ENCODE measurements at regions of chr11 and their contacts with region 1.

Region 1: DNA sequence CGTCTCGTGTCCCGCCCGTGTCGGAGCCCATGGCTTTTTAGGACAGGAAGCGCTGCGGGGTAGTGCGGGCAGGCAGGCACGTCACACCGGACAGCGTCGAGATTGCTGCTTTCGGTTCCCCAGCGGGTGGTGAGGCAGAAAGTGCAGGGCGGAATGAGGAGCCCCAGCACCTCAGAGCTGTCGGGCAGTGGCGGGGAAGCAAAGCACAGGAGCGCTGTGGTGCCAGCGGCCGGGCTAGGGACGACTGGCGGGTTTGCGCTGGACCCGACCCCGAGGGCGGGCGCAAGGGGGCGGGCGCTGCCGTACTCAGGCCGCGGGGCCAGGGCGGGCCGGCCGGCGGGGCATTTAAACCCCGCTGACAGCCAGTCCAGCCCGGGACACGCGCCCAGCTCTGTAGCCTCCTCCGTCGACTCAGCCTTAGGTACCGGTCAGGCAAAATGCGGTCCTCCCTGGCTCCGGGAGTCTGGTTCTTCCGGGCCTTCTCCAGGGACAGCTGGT is at the start of gene SLC37A2:
- DNase-seq: peak; percentile 60 to 66
- ATAC-seq: peak; percentile 88 to 90 (median 90)
- H3K4me3 ChIP-seq: peak within 1 kb of the TSS; percentile 55
- H3K4me3 Mint-ChIP-seq: peak within 1 kb of the TSS; percentile 90
- H3K27ac ChIP-seq: peak within 1 kb of the TSS; percentile 49
- H3K27ac Mint-ChIP-seq: peak within 1 kb of the TSS; percentile 70 to 86
- H3K4me1 ChIP-seq: peaks cover 13% of the 10 kb centered on the region
- H3K4me1 Mint-ChIP-seq: peaks cover 0 to 10% of the 10 kb centered on the region in 2 donors
- H3K27me3 ChIP-seq: no peaks in the 10 kb centered on the region
- H3K27me3 Mint-ChIP-seq: peaks cover 4 to 5% of the 10 kb centered on the region in 2 donors
- CTCF ChIP-seq: no peak
- total RNA-seq, gene SLC37A2: 1.0 to 3.2 (median 1.8) TPM

Region 2: DNA sequence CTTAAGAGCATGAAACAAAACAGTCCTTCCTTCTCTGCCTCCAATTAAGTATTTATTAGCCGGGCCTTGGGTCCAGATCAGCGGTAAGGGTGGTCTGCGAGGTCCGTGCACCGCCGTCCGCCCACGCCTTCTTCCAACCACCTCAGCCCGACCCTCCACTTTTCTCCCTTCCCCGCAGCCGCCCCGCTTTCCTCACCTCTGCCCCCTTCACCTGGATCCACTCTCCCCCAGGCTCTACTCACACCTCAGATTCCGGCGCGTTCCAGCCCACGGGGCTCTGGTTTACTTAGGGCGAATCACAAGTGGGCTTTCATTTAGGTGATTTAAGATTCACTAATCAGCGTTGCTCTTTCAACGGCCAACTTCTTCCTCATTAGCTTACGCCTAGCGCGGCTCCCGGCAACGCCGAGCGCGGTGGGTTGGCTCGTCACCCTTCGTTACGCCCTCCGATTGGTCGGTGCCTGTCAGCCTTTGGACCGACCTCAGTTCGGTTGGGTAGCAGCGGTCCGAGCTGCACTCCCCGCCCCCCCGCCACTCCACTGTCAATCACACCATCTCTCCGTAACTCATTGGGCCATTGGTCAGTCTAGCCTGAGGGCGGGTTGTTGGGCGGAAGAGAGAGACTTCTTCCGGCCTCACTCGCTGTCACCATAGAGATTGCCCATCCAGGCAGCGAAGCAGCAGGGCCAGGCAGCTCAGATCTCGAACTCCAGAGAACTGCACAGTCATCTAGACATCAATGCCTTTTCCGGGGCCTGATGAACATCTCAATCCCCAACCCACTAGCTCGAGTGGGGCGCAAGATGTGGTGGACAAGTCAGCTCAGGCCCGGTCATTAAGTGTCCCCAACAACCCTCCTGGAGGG is 48.6 kb after region 1 on chr11 and contains the start of gene TMEM218:
- intact Hi-C with region 1: loop called (anchors 2 kb)
- DNase-seq: peak; percentile 90 to 98
- ATAC-seq: peak; percentile 92 to 98 (median 95)
- H3K4me3 ChIP-seq: peak within 1 kb of the TSS; percentile 82
- H3K4me3 Mint-ChIP-seq: peak within 1 kb of the TSS; percentile 99
- H3K27ac ChIP-seq: peak within 1 kb of the TSS; percentile 84
- H3K27ac Mint-ChIP-seq: peak within 1 kb of the TSS; percentile 95 to 99
- H3K4me1 ChIP-seq: peaks cover 14% of the 10 kb centered on the region
- H3K4me1 Mint-ChIP-seq: peaks cover 17 to 23% of the 10 kb centered on the region in 2 donors
- H3K27me3 ChIP-seq: no peaks in the 10 kb centered on the region
- H3K27me3 Mint-ChIP-seq: peaks cover 0 to 9% of the 10 kb centered on the region in 2 donors
- CTCF ChIP-seq: no peak
- total RNA-seq, gene TMEM218: 10.0 to 14.2 (median 12.1) TPM